PC-9 (cell line): ENCODE measurements at regions of chrX and their contacts with region 1.

Region 1: GRCh38 chrX:106670631-106671030 is 55.9 kb upstream of the RNF128 start:
- DNase-seq: no peak
- H3K4me3 ChIP-seq: no peak overlapping the region
- H3K27ac ChIP-seq: no peak overlapping the region
- H3K4me1 ChIP-seq: no peaks in the 10 kb centered on the region
- H3K27me3 ChIP-seq: no peaks in the 10 kb centered on the region
- CTCF ChIP-seq: no peak

Region 2: DNA sequence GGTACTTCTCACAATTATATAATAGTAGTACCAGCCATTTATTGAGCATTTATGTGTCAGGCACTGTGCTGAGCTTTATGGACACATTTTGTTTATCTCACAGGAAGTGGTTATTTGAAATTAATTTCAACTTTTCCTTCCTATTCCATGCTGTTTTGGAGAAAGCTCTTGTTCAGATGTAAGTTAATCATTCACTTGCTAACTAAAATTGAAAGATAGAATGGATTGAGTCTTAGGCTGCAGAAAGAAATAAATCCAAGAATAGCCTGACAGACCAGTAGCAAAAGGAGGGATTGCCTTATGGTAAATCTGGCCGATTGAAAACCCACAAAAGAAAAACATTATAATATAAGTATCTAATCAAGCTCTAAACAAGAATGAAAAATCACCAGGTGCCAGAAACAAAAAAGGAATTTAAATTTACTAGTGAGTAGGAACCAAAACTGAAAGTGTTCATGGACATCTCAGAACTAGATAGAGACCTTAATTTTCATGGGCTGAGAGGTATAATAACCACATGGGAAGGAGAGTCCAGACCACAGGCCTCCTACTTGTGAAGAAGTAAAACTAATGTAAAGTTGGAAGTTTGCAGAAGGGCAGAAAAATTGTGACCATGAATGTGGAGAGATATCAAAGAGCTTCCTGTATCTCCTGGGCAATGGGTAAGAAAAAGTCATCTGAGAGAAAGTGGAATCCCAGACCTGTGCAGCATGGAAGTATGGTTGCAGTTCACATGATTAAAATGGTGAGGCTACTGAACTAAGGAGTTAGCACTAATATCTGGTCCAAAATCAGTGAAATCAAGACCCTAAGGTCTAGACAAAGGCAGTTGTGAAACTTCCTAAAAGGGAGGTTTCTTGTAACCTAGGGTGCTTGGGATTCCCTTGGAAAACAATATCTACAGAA is 20.9 kb before region 1 on chrX:
- CTCF ChIA-PET with region 1: no interaction called
- POLR2A ChIA-PET with region 1: interaction called, 10 read pairs
- intact Hi-C with region 1: no loop called
- DNase-seq: no peak
- H3K4me3 ChIP-seq: no peak overlapping the region
- H3K27ac ChIP-seq: no peak overlapping the region
- H3K4me1 ChIP-seq: no peaks in the 10 kb centered on the region
- H3K27me3 ChIP-seq: no peaks in the 10 kb centered on the region
- CTCF ChIP-seq: no peak

Region 3: GRCh38 chrX:106692425-106693065 is 21.9 kb after region 1 on chrX:
- CTCF ChIA-PET with region 1: no interaction called
- POLR2A ChIA-PET with region 1: no interaction called
- intact Hi-C with region 1: loop called (anchors 1 kb)
- DNase-seq: peak in 1 of 2 experiments; percentile 67
- H3K4me3 ChIP-seq: peak overlapping the region; percentile 21; the same call in 1 of the 2 replicates
- H3K27ac ChIP-seq: peak overlapping the region; percentile 62
- H3K4me1 ChIP-seq: peaks cover 28% of the 10 kb centered on the region
- H3K27me3 ChIP-seq: no peaks in the 10 kb centered on the region
- CTCF ChIP-seq: no peak